ENCODE measurements at regions of chr11 and their contacts with region 1.

Region 1: DNA sequence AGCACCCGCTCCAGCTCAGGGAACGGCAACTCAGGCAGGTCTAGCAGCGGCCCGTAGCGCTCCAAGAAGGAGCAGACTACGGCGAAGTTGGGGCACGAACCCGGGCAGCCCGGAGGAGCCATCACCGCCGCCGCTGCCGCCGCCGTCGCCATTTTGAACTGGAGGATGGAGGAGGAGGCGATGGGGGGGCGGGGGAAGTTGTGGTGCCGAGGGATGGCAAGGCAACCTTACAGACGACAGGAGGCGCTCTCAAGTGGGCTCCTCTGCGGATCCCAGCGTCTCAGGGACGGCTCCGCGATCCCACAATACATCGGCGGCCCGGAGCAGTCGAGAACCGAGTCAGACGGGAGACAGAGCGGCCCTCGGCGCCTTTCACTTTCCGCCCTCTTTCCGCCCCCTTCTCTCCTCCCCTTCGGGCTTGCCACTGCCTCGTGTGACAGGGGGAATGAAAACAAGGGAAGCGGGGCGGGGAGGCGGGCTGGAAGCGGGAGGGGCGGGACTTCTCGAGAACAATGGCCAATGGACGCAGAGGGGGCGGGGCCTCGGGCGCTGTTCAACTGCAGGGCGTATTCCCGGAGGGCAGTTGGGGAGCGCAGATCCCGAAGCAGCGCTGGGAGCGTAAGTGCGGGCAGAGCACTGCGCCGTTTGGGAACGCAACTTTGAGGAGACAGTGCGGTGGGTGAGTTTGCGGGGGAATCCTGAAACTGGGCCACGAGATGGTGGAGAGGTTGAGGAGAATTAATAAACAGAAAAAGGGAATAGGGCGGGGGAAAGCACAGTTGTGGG is at the starts of genes AAMDC and RSF1:
- DNase-seq: peak; percentile 94 to 99
- H3K4me3 ChIP-seq: peak within 1 kb of the TSS; percentile 77 to 84
- H3K27ac ChIP-seq: peak within 1 kb of the TSS; percentile 91 to 97
- H3K4me1 ChIP-seq: peaks cover 0 to 33% of the 10 kb centered on the region in 2 donors
- H3K27me3 ChIP-seq: no peaks in the 10 kb centered on the region
- CTCF ChIP-seq: peak; percentile 44 to 74 (median 68)
- total RNA-seq, gene AAMDC: 56.4 TPM
- total RNA-seq, gene RSF1: 17.8 TPM

Region 2: DNA sequence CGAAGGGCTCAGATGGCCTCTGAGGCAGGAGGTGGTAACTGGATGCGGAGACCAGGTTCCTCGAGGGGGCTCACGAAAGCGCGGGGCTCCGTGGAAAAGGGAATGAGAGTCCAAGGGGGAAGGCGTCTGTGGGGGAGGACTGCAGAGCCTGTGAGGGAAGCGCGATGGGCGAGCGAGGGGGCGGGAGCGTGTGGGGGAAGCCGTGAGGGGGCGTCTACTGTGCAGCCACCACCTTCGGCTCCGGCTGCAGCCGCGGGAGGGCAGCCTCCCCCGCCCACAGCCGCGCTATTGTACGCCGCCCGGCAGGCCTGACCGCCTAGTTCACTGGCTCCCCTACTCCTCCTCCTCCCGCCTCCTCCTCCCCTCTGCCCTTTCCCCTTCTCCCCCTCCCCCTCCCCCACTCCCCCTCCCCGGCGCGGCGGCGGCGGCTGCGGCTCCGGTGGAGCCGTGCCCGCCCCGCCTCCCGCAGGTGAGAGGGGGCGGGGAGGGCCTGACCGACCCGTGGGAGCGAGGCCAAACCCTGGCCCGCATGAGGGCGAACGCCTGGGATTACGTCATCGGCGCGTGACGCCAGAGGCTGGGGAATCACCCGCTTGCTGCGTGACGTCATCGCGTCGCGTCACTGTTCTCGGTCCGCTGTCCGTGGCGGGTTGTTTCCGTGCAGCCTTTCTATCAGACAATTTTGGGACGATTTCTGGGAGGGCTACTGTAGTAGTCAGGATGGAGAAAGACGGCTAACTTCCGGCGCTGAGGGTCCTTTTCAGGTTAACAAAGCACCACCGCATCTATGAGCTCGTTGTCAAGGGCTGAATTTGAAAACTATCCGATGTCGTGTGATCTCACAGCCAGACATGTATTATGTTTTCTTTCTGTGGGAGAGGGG is 346.7 kb before region 1 on chr11 and contains the start of gene PAK1:
- intact Hi-C with region 1: loop called (anchors 2 kb)
- DNase-seq: peak; percentile 35 to 90
- H3K4me3 ChIP-seq: peak within 1 kb of the TSS; percentile 77 to 82
- H3K27ac ChIP-seq: peak within 1 kb of the TSS in 1 of 2 donors; percentile 20
- H3K4me1 ChIP-seq: peaks cover 0 to 8% of the 10 kb centered on the region in 2 donors
- H3K27me3 ChIP-seq: no peaks in the 10 kb centered on the region
- CTCF ChIP-seq: no peak
- total RNA-seq, gene PAK1: 39.8 TPM

Region 3: GRCh38 chr11:77647654-77648305 is 173.0 kb before region 1 on chr11:
- intact Hi-C with region 1: no loop called
- DNase-seq: no peak
- H3K4me3 ChIP-seq: no peak overlapping the region
- H3K27ac ChIP-seq: no peak overlapping the region
- H3K4me1 ChIP-seq: no peaks in the 10 kb centered on the region
- H3K27me3 ChIP-seq: no peaks in the 10 kb centered on the region
- CTCF ChIP-seq: no peak

Region 4: DNA sequence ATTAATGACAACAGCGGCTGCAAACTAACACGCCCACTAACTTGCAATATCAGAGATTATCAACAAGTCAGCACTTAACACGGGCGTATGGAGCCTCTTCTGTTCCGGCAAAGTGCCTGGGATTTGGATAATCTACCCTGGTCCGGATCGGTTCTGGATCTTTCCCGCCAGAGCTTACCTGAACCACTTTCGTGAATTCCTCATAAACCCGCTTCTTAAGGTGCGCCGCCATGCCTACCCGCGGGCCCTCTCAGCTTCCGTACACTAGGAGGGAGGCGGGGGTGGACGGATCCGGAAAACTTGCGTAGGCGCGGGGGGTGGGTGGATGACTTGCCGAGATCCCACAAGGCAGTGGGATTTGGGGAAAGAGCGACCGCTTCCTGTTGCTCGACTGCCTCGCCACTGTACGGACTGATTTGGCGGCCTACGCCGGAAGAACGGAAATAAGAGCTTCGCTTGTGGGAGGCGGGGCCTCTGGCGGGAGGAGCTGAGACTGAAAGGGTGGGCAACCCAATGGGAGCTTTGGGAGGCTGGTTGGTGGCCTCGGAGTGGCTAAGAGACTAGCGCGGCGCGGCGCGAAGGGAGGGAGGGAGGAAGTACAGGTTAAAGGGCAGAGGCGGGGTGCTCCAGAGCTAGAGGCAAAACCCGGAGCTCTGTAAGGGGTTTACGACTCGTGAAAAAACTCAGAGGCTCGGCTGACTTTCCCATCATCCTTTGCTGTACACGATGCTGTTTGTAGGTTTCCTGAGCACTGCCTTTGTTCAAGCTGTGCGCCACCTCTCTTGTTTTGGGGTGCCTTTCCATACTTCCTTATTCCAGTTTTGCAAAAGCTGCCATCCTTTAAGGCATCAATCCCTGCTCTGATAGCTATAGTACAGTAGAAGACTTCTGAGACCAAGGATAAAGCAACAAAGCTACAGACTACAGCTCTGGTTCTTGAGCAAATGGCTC is 173.9 kb after region 1 on chr11 and contains the start of gene INTS4:
- intact Hi-C with region 1: loop called (anchors 1 kb)
- DNase-seq: peak; percentile 97 to 99
- H3K4me3 ChIP-seq: peak within 1 kb of the TSS; percentile 63 to 65
- H3K27ac ChIP-seq: peak within 1 kb of the TSS; percentile 79
- H3K4me1 ChIP-seq: peaks cover 0 to 11% of the 10 kb centered on the region in 2 donors
- H3K27me3 ChIP-seq: no peaks in the 10 kb centered on the region
- CTCF ChIP-seq: peak in 1 of 3 experiments; percentile 15
- total RNA-seq, gene INTS4: 10.7 TPM

Region 5: GRCh38 chr11:78188286-78189173 is 367.8 kb after region 1 on chr11 and contains the starts of genes KCTD21 and USP35:
- intact Hi-C with region 1: loop called (anchors 1 kb)
- DNase-seq: peak; percentile 95 to 99
- H3K4me3 ChIP-seq: peak within 1 kb of the TSS; percentile 72 to 91
- H3K27ac ChIP-seq: peak within 1 kb of the TSS; percentile 87 to 91
- H3K4me1 ChIP-seq: peaks cover 8 to 43% of the 10 kb centered on the region in 2 donors
- H3K27me3 ChIP-seq: no peaks in the 10 kb centered on the region
- CTCF ChIP-seq: no peak
- total RNA-seq, gene KCTD21: 30.7 TPM
- total RNA-seq, gene USP35: 34.0 TPM